B cell (primary cell): ENCODE measurements at regions of chr19 and their contacts with region 1.

Region 1: GRCh38 chr19:18940769-18941407 is at the start of gene HOMER3:
- DNase-seq: peak; percentile 82
- ATAC-seq: peak; percentile 89
- H3K4me3 ChIP-seq: peak within 1 kb of the TSS; percentile 15 to 67 (median 49)
- H3K4me3 Mint-ChIP-seq: peak within 1 kb of the TSS; percentile 81
- H3K27ac ChIP-seq: no peak within 1 kb of the TSS
- H3K27ac Mint-ChIP-seq: no peak within 1 kb of the TSS
- H3K4me1 ChIP-seq: peaks cover 16 to 20% of the 10 kb centered on the region in 2 donors
- H3K4me1 Mint-ChIP-seq: peaks cover 20% of the 10 kb centered on the region
- H3K27me3 ChIP-seq: peaks cover 0 to 26% (median 6%) of the 10 kb centered on the region in 4 experiments
- H3K27me3 Mint-ChIP-seq: peaks cover 28% of the 10 kb centered on the region
- CTCF ChIP-seq: no peak
- total RNA-seq, gene HOMER3: 4.7 and 5.9 TPM in 2 replicates

Region 2: GRCh38 chr19:18594096-18594823 is 346.6 kb before region 1 on chr19:
- CTCF ChIA-PET with region 1: no interaction called
- POLR2A ChIA-PET with region 1: no interaction called
- intact Hi-C with region 1: loop called (anchors 2 kb)
- DNase-seq: peak; percentile 86
- ATAC-seq: peak; percentile 86
- H3K4me3 ChIP-seq: peak overlapping the region in 4 of 5 experiments; percentile 42 to 69 (median 48)
- H3K4me3 Mint-ChIP-seq: peak overlapping the region; percentile 79
- H3K27ac ChIP-seq: no peak overlapping the region
- H3K27ac Mint-ChIP-seq: peak overlapping the region; percentile 59
- H3K4me1 ChIP-seq: peaks cover 21 to 39% of the 10 kb centered on the region in 2 donors
- H3K4me1 Mint-ChIP-seq: peaks cover 25% of the 10 kb centered on the region
- H3K27me3 ChIP-seq: peaks cover 0 to 29% (median 8%) of the 10 kb centered on the region in 4 experiments
- H3K27me3 Mint-ChIP-seq: peaks cover 7% of the 10 kb centered on the region
- CTCF ChIP-seq: peak; percentile 84